ENCODE measurements at regions of chr16 and their contacts with region 1.

Region 1: DNA sequence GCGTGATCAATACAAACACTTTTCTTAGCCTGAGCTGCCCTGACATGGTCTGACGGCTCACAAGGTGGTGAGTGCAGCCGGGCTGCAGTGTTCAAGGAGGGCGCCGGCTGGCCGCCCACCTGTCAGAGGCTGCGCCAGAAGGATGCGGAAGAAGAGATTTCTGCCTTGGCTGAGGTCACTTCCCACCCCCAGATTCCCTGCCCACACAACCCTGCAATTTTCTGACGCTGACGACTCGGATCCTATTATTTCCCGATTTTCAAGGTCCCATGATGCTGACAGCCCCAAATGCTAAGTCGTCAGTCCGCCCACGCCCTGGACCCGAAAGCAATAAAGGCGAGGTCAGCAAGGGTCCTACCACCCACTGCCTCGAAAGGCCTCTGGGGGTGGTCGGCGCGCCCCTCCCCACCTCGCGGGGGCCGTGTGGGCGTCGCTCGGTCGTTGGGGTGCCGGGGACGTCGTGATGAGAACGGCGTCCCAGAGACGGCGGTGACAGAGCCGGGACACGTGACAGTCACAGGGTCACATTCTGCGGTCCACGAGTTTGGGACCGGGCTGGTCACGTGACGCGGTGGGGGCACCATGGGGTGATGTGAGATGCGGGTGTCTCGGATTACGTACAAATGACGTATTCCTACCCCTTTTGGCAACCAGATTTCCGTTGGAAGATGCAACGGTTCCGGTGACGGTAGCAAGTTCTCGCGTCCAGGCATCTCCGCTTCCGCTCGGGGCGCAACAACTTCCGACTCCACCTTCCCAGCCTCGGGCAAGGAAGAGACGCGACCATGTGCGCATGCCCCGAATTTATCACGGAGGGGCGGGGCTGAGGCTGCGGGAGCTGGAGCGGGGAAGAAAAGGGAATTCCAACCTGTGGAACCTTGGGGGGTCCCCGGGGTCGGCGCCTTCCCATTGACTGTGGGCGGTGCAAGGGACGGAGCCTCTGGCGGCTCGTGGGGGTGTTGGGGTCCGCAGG is at the start of gene STX4:
- DNase-seq: peak; percentile 97
- H3K4me3 Mint-ChIP-seq: peak within 1 kb of the TSS; percentile 87
- H3K27ac Mint-ChIP-seq: peak within 1 kb of the TSS; percentile 89
- H3K4me1 Mint-ChIP-seq: peaks cover 16% of the 10 kb centered on the region
- H3K27me3 Mint-ChIP-seq: no peaks in the 10 kb centered on the region
- total RNA-seq, gene STX4: 48.2 and 51.8 TPM in 2 replicates

Region 2: GRCh38 chr16:30997000-30997886 is 35.8 kb before region 1 on chr16:
- intact Hi-C with region 1: loop called (anchors 2 kb)
- DNase-seq: peak; percentile 67
- H3K4me3 Mint-ChIP-seq: peak overlapping the region; percentile 74
- H3K27ac Mint-ChIP-seq: no peak overlapping the region
- H3K4me1 Mint-ChIP-seq: peaks cover 13% of the 10 kb centered on the region
- H3K27me3 Mint-ChIP-seq: peaks cover 2% of the 10 kb centered on the region

Region 3: GRCh38 chr16:31105677-31106213 is 72.7 kb after region 1 on chr16:
- intact Hi-C with region 1: no loop called
- DNase-seq: peak; percentile 72
- H3K4me3 Mint-ChIP-seq: no peak overlapping the region
- H3K27ac Mint-ChIP-seq: peak overlapping the region; percentile 66
- H3K4me1 Mint-ChIP-seq: peaks cover 18% of the 10 kb centered on the region
- H3K27me3 Mint-ChIP-seq: no peaks in the 10 kb centered on the region

Region 4: GRCh38 chr16:31117391-31118197 is 84.6 kb after region 1 on chr16 and contains the start of gene KAT8:
- intact Hi-C with region 1: loop called (anchors 2 kb)
- DNase-seq: peak; percentile 97
- H3K4me3 Mint-ChIP-seq: peak within 1 kb of the TSS; percentile 86
- H3K27ac Mint-ChIP-seq: peak within 1 kb of the TSS; percentile 75
- H3K4me1 Mint-ChIP-seq: peaks cover 16% of the 10 kb centered on the region
- H3K27me3 Mint-ChIP-seq: no peaks in the 10 kb centered on the region
- total RNA-seq, gene KAT8: 60.5 and 61.2 TPM in 2 replicates

Measured in activated T-helper 2 cell treated with anti-CD3 and anti-CD28 coated beads, Interferon-gamma antibody, Interleukin-2, Interleukin-4, amounts not matched to agents 10 μg/mL and 5 μg/mL and 100 μg/mL, durations not matched to agents 14 hours and 24 hours and 36 hours (primary cell).